Endothelial cell of umbilical vein (primary cell): ENCODE measurements at regions of chr5 and their contacts with region 1.

Region 1: DNA sequence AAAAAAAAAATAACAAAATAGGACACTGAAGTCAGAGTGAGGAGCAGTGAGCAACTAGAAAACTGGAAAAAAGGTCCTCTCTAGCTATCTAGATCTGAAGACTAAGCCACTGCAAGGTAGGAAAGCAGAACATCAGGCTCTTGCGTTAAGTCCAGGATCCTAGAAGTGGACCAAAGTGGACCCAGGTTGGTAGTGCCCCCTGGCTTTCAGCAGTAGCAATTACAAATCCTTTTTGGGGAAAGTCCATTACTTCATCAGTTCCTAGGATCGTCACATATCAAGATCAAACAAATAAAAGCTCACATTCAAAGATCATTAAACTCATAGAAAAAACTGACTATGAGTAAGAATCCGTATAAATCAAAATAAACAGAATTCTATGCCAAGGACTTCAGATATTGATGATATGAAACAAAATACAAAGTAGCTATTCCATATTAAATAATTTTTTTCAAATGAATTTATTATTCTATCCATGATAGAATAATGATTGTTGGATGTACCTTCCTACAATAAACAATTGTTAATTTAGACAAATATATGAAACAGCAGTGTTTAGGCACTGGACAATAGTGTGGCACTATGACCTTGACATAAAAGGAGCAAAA is 6.5 kb upstream of the RICTOR start:
- DNase-seq: peak; percentile 73
- H3K4me3 ChIP-seq: no peak overlapping the region
- H3K27ac ChIP-seq: peak overlapping the region; percentile 47
- H3K4me1 ChIP-seq: peaks cover 28% of the 10 kb centered on the region
- H3K27me3 ChIP-seq: no peaks in the 10 kb centered on the region
- CTCF ChIP-seq: peak; percentile 72 to 74
- POLR2A ChIP-seq: no peak

Region 2: DNA sequence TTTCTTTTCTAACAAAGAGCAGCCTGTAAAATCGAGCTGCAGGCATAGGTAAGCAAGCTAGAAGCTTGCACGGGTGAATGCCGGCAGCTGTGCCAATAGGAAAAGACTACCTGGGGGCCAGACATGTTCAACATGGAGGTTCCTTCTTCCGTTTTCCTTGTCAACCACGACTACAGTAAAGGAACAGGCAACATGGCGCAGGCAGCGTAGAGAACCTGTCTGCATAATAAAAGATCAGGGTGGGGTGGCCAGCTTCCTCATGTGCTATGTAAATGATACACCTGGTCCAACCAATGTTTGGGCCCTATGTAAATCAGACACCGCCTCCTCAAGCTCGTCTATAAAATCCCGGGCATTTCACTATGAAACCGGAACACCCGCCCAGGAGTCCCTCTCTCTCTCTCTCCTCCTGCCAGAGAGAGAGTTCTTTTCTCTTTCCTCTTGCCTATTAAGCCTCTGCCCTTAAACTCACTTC is 420.5 kb before region 1 on chr5:
- CTCF ChIA-PET with region 1: no interaction called
- POLR2A ChIA-PET with region 1: no interaction called
- dilution Hi-C with region 1: no loop called
- intact Hi-C with region 1: no loop called
- DNase-seq: no peak
- H3K4me3 ChIP-seq: no peak overlapping the region
- H3K27ac ChIP-seq: no peak overlapping the region
- H3K4me1 ChIP-seq: peaks cover 11% of the 10 kb centered on the region
- H3K27me3 ChIP-seq: no peaks in the 10 kb centered on the region
- CTCF ChIP-seq: no peak
- POLR2A ChIP-seq: no peak

Region 3: GRCh38 chr5:39005566-39006232 is 75.0 kb before region 1 on chr5:
- CTCF ChIA-PET with region 1: interaction called, 12 read pairs
- POLR2A ChIA-PET with region 1: no interaction called
- dilution Hi-C with region 1: no loop called
- intact Hi-C with region 1: no loop called
- DNase-seq: peak; percentile 12
- H3K4me3 ChIP-seq: no peak overlapping the region
- H3K27ac ChIP-seq: no peak overlapping the region
- H3K4me1 ChIP-seq: no peaks in the 10 kb centered on the region
- H3K27me3 ChIP-seq: no peaks in the 10 kb centered on the region
- CTCF ChIP-seq: no peak
- POLR2A ChIP-seq: no peak

Region 4: DNA sequence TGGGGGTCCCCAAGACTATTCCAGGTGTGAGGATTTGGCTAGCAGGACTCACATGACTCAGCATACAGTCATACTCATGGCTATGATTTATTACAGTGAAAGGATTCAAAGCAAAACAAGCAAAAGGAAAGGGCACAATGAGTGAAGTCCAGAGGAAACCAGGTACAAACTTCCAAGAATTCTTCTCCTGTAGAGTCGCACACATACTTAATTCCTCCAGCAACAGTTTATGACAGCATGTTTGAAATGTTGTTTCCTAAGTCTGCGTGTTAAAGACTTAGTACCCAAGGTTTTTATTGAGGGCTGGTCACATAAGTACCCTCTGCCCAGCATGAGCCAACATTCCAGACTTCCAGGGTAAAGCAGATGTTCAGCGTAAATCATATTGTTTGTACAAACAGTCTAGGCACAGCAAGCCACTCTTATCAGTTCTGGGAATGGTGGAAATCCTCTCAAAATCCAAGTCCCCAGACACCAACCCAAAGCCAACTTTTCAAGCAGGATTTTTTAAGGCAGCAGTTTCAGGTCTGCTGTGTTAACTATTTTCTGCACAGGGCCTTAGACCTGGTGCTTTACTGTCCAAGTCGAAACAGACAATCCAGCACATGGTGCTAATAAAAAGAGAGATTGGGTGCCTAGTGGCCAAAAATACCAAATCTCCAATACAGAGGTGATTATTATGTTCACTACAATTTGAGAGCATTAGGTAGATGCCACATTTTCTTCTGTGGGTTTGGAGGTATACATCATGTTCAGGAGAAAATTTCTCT is 12.1 kb after region 1 on chr5:
- CTCF ChIA-PET with region 1: interaction called, 38 read pairs
- POLR2A ChIA-PET with region 1: no interaction called
- dilution Hi-C with region 1: no loop called
- intact Hi-C with region 1: loop called (anchors 1 kb)
- DNase-seq: peak; percentile 87
- H3K4me3 ChIP-seq: no peak overlapping the region
- H3K27ac ChIP-seq: peak overlapping the region; percentile 79
- H3K4me1 ChIP-seq: peaks cover 17% of the 10 kb centered on the region
- H3K27me3 ChIP-seq: no peaks in the 10 kb centered on the region
- CTCF ChIP-seq: no peak
- POLR2A ChIP-seq: no peak

Region 5: DNA sequence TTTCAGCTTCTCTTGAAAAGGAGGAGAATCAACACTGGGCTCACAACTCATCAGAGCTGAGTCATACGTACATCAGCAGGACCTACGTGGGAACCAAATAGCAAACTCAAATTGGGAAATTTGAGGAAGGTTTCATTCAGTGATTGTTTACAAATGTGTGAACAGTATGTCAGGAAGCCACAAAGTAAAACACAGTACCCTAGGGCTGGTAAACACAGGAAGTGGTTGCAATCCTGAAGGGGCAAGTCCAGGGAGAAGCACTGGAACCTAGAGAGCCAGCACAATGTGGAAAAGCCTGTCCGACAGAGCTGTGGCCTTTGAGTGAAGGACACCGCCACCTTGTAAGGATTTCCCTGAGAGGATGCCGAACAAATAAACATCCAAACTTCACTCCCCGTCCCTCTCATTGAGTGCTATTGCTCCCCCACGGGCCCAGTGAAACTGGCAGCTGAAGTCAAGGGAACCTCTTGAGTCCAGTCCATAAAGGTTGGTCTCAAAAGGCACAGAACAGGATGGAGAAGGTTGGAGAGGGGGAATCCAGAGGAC is 20.2 kb after region 1 on chr5:
- CTCF ChIA-PET with region 1: interaction called, 38 read pairs
- POLR2A ChIA-PET with region 1: no interaction called
- dilution Hi-C with region 1: no loop called
- intact Hi-C with region 1: no loop called
- DNase-seq: peak; percentile 65
- H3K4me3 ChIP-seq: no peak overlapping the region
- H3K27ac ChIP-seq: peak overlapping the region; percentile 14
- H3K4me1 ChIP-seq: peaks cover 20% of the 10 kb centered on the region
- H3K27me3 ChIP-seq: no peaks in the 10 kb centered on the region
- CTCF ChIP-seq: no peak
- POLR2A ChIP-seq: no peak

Region 6: GRCh38 chr5:39106322-39106721 is 25.6 kb after region 1 on chr5:
- CTCF ChIA-PET with region 1: interaction called, 14 read pairs
- POLR2A ChIA-PET with region 1: no interaction called
- dilution Hi-C with region 1: no loop called
- intact Hi-C with region 1: no loop called
- DNase-seq: no peak
- H3K4me3 ChIP-seq: no peak overlapping the region
- H3K27ac ChIP-seq: no peak overlapping the region
- H3K4me1 ChIP-seq: peaks cover 13% of the 10 kb centered on the region
- H3K27me3 ChIP-seq: no peaks in the 10 kb centered on the region
- CTCF ChIP-seq: peak in 1 of 2 donors; percentile 2
- POLR2A ChIP-seq: no peak

Region 7: GRCh38 chr5:39117401-39117800 is 36.7 kb after region 1 on chr5:
- CTCF ChIA-PET with region 1: interaction called, 16 read pairs
- POLR2A ChIA-PET with region 1: interaction called, 5 read pairs
- dilution Hi-C with region 1: no loop called
- intact Hi-C with region 1: no loop called
- DNase-seq: peak; percentile 97
- H3K4me3 ChIP-seq: no peak overlapping the region
- H3K27ac ChIP-seq: peak overlapping the region; percentile 64
- H3K4me1 ChIP-seq: peaks cover 54% of the 10 kb centered on the region
- H3K27me3 ChIP-seq: no peaks in the 10 kb centered on the region
- CTCF ChIP-seq: no peak
- POLR2A ChIP-seq: no peak